Activated CD8-positive, alpha-beta T cell treated with anti-CD3 and anti-CD28 coated beads, Interleukin-2, amount 10 ng/mL, durations not matched to agents 7 days and 5 days (primary cell): ENCODE measurements at regions of chr11 and their contacts with region 1.

Region 1: GRCh38 chr11:1694064-1694845 is 2.7 kb upstream of the KRTAP5-6 start:
- DNase-seq: peak; percentile 82
- ATAC-seq: peak; percentile 90
- H3K4me3 Mint-ChIP-seq: no peak overlapping the region
- H3K27ac Mint-ChIP-seq: peak overlapping the region; percentile 49
- H3K4me1 Mint-ChIP-seq: peaks cover 10% of the 10 kb centered on the region
- H3K27me3 Mint-ChIP-seq: peaks cover 27% of the 10 kb centered on the region

Region 2: GRCh38 chr11:1546536-1547400 is 147.5 kb before region 1 on chr11:
- CTCF ChIA-PET with region 1: no interaction called
- POLR2A ChIA-PET with region 1: no interaction called
- DNase-seq: peak; percentile 32
- ATAC-seq: peak; percentile 59
- H3K4me3 Mint-ChIP-seq: no peak overlapping the region
- H3K27ac Mint-ChIP-seq: no peak overlapping the region
- H3K4me1 Mint-ChIP-seq: peaks cover 4% of the 10 kb centered on the region
- H3K27me3 Mint-ChIP-seq: peaks cover 29% of the 10 kb centered on the region

Region 3: GRCh38 chr11:1667906-1668305 is 26.3 kb before region 1 on chr11:
- CTCF ChIA-PET with region 1: no interaction called
- POLR2A ChIA-PET with region 1: no interaction called
- DNase-seq: no peak
- ATAC-seq: no peak
- H3K4me3 Mint-ChIP-seq: no peak overlapping the region
- H3K27ac Mint-ChIP-seq: no peak overlapping the region
- H3K4me1 Mint-ChIP-seq: no peaks in the 10 kb centered on the region
- H3K27me3 Mint-ChIP-seq: peaks cover 17% of the 10 kb centered on the region

Region 4: DNA sequence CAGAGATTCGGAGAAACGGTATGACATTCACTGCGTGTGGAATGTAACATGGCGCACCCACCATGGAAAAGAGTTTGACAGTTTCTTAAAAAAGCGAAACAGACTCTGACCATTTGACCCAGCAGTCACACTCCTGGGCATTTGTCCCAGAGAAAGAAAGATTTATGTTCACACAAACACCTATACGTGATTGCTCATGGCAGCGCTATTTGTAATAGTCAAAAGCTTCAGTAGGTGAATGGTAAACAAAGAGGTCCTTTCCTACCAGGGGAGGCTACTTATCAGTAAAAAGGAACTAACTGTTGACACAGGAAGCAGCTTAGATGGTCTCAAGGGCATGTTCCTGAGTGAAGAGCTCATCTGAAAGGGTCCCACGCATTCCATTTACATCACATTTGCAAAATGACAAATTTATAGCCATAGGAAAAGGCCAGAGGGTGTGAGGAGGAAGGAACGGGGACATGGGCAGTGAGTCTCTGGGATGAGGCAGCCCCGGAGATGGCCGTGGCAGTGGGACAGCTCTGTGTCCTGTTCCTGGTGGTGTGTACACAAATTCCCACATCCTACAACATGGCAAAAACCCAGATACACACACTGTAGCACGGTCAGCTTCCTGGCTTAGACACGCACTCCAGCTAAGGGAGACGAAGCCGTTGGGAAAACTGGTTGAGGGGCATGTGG is 11.9 kb before region 1 on chr11:
- CTCF ChIA-PET with region 1: interaction called, 24 read pairs
- POLR2A ChIA-PET with region 1: no interaction called
- DNase-seq: no peak
- ATAC-seq: no peak
- H3K4me3 Mint-ChIP-seq: no peak overlapping the region
- H3K27ac Mint-ChIP-seq: no peak overlapping the region
- H3K4me1 Mint-ChIP-seq: no peaks in the 10 kb centered on the region
- H3K27me3 Mint-ChIP-seq: peaks cover 3% of the 10 kb centered on the region

Region 5: GRCh38 chr11:1757861-1758610 is 63.8 kb after region 1 on chr11:
- CTCF ChIA-PET with region 1: interaction called, 30 read pairs
- POLR2A ChIA-PET with region 1: interaction called, 5 read pairs
- DNase-seq: peak; percentile 85
- ATAC-seq: peak; percentile 74
- H3K4me3 Mint-ChIP-seq: peak overlapping the region; percentile 78
- H3K27ac Mint-ChIP-seq: peak overlapping the region; percentile 96
- H3K4me1 Mint-ChIP-seq: peaks cover 82% of the 10 kb centered on the region
- H3K27me3 Mint-ChIP-seq: no peaks in the 10 kb centered on the region

Region 6: GRCh38 chr11:1792461-1792860 is 98.2 kb after region 1 on chr11:
- CTCF ChIA-PET with region 1: interaction called, 15 read pairs
- POLR2A ChIA-PET with region 1: no interaction called
- DNase-seq: peak; percentile 52
- ATAC-seq: peak; percentile 64
- H3K4me3 Mint-ChIP-seq: peak overlapping the region; percentile 67
- H3K27ac Mint-ChIP-seq: peak overlapping the region; percentile 96
- H3K4me1 Mint-ChIP-seq: peaks cover 17% of the 10 kb centered on the region
- H3K27me3 Mint-ChIP-seq: peaks cover 14% of the 10 kb centered on the region

Region 7: DNA sequence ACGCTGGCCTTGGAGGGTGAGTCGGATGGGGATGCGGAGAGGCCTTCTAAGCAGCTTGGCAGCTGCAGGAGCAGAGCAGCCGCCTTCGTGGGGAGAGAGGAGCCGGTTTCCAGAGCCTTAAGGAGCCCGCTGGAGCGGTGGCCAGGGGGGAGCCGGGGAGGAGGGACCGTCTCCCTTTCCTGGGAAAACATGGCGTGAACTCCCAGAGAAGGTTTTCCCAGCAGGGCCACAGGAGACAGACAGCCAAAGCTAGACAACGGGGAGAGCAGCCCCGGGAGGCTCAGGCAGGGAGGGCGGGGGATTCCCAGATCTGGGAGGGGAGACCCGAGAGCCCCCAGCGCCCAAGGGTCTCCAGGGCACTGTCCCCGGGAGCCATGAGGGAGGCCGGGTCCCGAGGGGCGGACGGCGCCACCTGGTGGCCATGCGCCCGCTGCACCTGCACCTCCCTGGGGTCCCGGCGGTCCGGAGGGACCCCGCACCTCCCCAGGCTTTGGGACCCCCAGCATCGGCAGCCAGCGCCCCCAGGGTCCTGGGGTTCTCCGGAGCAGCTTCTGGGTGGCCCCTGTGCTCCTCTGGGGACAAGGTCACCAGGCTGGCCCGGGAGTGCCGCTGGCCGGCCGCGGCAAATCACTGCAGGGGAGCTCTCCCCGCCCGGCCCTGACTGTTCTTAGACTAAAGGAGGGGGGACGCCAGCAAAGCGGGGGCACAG is 138.1 kb after region 1 on chr11:
- CTCF ChIA-PET with region 1: interaction called, 311 read pairs
- POLR2A ChIA-PET with region 1: interaction called, 10 read pairs
- DNase-seq: peak; percentile 68
- ATAC-seq: peak; percentile 71
- H3K4me3 Mint-ChIP-seq: no peak overlapping the region
- H3K27ac Mint-ChIP-seq: no peak overlapping the region
- H3K4me1 Mint-ChIP-seq: no peaks in the 10 kb centered on the region
- H3K27me3 Mint-ChIP-seq: peaks cover 4% of the 10 kb centered on the region

Region 8: DNA sequence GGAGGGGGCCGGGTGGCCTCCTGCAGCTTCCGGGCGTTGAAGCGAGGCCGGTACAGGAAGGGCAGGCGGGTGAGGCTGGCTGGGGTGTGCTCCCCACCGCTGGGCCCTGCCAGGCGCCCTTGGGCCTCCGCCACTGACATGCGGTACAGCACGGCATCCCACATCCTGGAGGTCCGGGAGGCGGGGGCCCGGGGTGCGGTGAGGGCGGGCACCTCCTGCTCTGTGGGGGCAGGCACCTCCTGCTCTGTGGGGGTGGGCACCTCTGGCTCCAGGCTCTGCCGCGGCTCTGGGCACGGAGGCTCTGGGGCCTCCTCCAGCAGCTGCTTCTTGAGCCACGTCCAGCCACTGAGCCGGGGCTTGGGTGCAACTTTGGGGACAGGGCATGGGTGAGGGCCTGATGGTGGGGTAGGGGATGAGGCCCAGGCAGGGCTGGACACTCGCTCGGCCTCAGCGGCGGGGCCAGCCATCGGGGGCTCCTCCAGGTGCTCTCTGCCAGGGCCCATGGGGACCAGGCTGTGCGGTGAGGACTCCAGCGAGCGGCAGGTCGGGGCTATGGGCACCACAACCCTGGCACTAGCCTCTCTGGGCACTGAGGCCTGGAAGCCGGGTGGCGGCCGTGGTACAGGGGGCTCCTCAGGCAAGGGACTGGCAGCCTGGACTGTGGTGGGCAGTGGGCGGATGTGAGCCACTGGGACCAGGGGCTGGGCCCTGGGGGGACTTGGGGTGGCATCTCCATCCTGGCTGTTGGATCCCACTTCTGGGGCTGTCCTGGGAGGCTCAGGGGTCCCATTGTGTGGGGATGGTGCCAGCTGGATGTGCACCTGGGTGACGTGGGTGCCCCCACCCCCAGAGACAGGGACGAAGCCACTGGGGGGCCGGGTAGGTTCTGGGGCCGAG is 195.2 kb after region 1 on chr11:
- CTCF ChIA-PET with region 1: interaction called, 15 read pairs
- POLR2A ChIA-PET with region 1: no interaction called
- DNase-seq: peak; percentile 91
- ATAC-seq: peak; percentile 75
- H3K4me3 Mint-ChIP-seq: peak overlapping the region; percentile 70
- H3K27ac Mint-ChIP-seq: peak overlapping the region; percentile 88
- H3K4me1 Mint-ChIP-seq: peaks cover 54% of the 10 kb centered on the region
- H3K27me3 Mint-ChIP-seq: no peaks in the 10 kb centered on the region